H1 (cell line): ENCODE measurements at regions of chr12 and their contacts with region 1.

Region 1: DNA sequence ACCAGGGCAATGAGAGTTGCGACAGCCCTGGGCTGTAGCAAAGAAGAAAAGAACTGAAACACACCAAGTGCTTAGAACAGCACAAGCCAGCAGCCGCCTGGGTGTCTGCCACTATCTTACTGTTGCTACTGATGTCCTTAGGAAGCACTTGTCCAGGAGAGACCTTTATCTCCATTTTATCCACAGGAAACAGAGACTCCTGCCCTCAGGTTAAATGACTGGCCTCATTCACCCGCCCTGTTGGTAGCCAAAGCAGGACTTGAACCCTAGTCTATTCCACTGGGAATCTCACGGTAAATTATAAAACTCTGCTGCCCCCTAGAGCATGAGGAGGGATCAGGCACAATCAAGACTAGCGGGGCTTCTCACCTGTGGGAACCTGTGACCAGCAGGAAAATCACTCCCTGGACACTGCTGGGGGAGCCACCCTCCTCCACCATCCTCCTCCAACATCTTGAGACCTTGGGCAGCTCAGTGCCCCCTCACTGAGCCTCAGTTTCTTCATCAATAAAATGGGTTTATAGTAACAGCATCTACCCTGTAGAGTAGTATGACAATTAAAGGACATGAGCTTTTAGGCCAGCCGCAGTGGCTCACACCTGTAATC is 20.5 kb upstream of the TESC start:
- DNase-seq: peak in 1 of 2 experiments; percentile 79
- H3K4me3 ChIP-seq: no peak overlapping the region
- H3K27ac ChIP-seq: no peak overlapping the region
- H3K4me1 ChIP-seq: peaks cover 0 to 7% (median 3%) of the 10 kb centered on the region in 4 experiments; a peak in 6 of 7 replicates
- H3K27me3 ChIP-seq: no peaks in the 10 kb centered on the region
- CTCF ChIP-seq: peak; percentile 63 to 89 (median 86)
- EP300 ChIP-seq: no peak
- POLR2A ChIP-seq: no peak
- RAD21 ChIP-seq: peak; percentile 88 to 95

Region 2: GRCh38 chr12:116977465-116978380 is 142.0 kb before region 1 on chr12:
- CTCF ChIA-PET with region 1: interaction called, 12 read pairs
- POLR2A ChIA-PET with region 1: no interaction called
- DNase-seq: no peak
- H3K4me3 ChIP-seq: no peak overlapping the region
- H3K27ac ChIP-seq: no peak overlapping the region
- H3K4me1 ChIP-seq: peaks cover 0 to 2% (median under 1%) of the 10 kb centered on the region in 4 experiments; a peak in 2 of 7 replicates
- H3K27me3 ChIP-seq: no peaks in the 10 kb centered on the region
- CTCF ChIP-seq: no peak
- EP300 ChIP-seq: no peak
- POLR2A ChIP-seq: no peak
- RAD21 ChIP-seq: no peak

Region 3: DNA sequence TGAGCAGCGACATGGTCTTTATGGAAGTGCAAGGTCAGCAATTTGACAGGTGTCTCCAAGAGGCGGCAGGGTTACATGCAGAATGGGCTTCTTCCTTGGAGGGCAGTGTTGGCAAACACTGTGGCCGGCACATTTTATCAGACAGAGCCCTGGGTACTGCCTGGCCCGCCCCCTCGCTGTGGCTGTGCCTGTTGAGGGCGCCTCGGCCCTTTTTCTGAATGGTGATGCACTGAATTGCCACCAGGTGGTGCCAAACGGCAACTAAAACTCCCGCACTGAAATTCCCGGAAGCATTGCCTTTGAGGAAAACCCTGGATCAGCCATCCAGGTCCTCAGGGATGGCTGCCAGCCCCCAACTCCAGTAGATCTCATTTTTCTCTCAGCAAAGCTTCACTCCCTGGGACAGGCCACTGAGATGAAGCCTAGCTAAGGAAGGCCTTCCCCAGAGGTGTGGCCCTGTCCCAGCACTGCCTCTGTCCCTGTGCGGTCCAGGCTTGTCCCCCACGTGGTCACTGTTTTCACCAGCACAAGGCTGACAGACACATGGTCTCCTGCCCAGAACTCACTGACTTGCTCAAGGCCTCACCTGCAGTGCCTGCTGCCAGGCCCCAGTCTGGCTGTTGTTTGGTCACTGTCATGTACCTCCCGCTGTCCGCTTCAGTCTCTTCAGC is 94.1 kb before region 1 on chr12:
- CTCF ChIA-PET with region 1: interaction called, 161 read pairs
- POLR2A ChIA-PET with region 1: interaction called, 3 read pairs
- DNase-seq: peak; percentile 38 to 90
- H3K4me3 ChIP-seq: no peak overlapping the region
- H3K27ac ChIP-seq: 0 out of 2 replicates have a peak overlapping the region, but pooled peaks have one; percentile 5
- H3K4me1 ChIP-seq: peaks cover 0 to 2% (median 0%) of the 10 kb centered on the region in 4 experiments; a peak in 1 of 7 replicates
- H3K27me3 ChIP-seq: no peaks in the 10 kb centered on the region
- CTCF ChIP-seq: peak; percentile 80 to 97 (median 82)
- EP300 ChIP-seq: no peak
- POLR2A ChIP-seq: no peak
- RAD21 ChIP-seq: peak; percentile 94 to 98

Region 4: GRCh38 chr12:117047810-117048584 is 71.7 kb before region 1 on chr12:
- CTCF ChIA-PET with region 1: interaction called, 21 read pairs
- POLR2A ChIA-PET with region 1: no interaction called
- DNase-seq: no peak
- H3K4me3 ChIP-seq: no peak overlapping the region
- H3K27ac ChIP-seq: no peak overlapping the region
- H3K4me1 ChIP-seq: peaks cover 2 to 35% (median 26%) of the 10 kb centered on the region in 4 experiments
- H3K27me3 ChIP-seq: no peaks in the 10 kb centered on the region
- CTCF ChIP-seq: no peak
- EP300 ChIP-seq: no peak
- POLR2A ChIP-seq: no peak
- RAD21 ChIP-seq: no peak

Region 5: DNA sequence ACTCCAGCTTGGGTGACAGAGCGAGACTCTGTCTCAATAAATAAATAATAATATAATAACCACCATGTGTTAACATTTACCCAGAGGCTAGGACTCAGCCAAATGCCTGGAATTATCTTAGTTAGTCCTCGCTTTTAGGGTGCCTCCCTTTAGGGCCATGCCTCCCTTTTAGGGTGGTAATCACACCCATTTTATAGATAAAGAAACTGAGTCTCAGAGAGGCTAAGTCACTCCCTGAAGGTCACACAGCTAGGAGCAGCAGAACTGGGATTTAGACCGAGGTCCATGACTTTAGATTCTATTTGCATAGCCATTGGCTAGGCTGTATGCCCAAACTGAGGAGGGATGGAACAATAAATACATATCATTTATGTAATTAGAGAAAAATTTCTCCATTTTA is 31.9 kb before region 1 on chr12:
- CTCF ChIA-PET with region 1: interaction called, 43 read pairs
- POLR2A ChIA-PET with region 1: interaction called, 3 read pairs
- DNase-seq: no peak
- H3K4me3 ChIP-seq: no peak overlapping the region
- H3K27ac ChIP-seq: no peak overlapping the region
- H3K4me1 ChIP-seq: peaks cover 0 to 8% (median 1%) of the 10 kb centered on the region in 4 experiments; a peak in 4 of 7 replicates
- H3K27me3 ChIP-seq: no peaks in the 10 kb centered on the region
- CTCF ChIP-seq: no peak
- EP300 ChIP-seq: no peak
- POLR2A ChIP-seq: no peak
- RAD21 ChIP-seq: no peak

Region 6: DNA sequence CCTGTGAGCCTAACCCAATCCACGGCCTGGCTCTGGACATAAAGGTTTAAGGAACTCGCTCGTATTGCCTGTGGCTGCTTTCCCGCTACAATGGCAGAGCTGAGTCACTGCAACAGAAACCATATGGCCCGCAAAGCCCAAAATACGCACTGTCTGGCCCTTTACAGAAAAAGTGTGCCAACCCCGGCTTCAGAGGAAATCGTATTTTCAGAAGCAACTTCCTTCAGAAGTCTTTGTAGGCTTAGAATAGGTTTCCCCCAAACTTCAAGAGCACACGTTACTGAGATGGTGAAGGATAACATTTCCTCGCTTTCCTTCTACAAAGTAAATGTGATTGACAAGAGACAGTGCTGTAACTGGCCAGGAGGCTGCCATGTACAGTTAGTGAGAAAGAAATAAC is 14.4 kb after region 1 on chr12:
- CTCF ChIA-PET with region 1: interaction called, 53 read pairs
- POLR2A ChIA-PET with region 1: interaction called, 7 read pairs
- DNase-seq: no peak
- H3K4me3 ChIP-seq: no peak overlapping the region
- H3K27ac ChIP-seq: no peak overlapping the region
- H3K4me1 ChIP-seq: no peaks in the 10 kb centered on the region
- H3K27me3 ChIP-seq: no peaks in the 10 kb centered on the region
- CTCF ChIP-seq: no peak
- EP300 ChIP-seq: no peak
- POLR2A ChIP-seq: no peak
- RAD21 ChIP-seq: no peak

Region 7: GRCh38 chr12:117158911-117159310 is 39.2 kb after region 1 on chr12:
- CTCF ChIA-PET with region 1: no interaction called
- POLR2A ChIA-PET with region 1: no interaction called
- DNase-seq: no peak
- H3K4me3 ChIP-seq: no peak overlapping the region
- H3K27ac ChIP-seq: no peak overlapping the region
- H3K4me1 ChIP-seq: peaks cover 0 to 4% (median 4%) of the 10 kb centered on the region in 4 experiments; a peak in 4 of 7 replicates
- H3K27me3 ChIP-seq: no peaks in the 10 kb centered on the region
- CTCF ChIP-seq: no peak
- EP300 ChIP-seq: no peak
- POLR2A ChIP-seq: no peak
- RAD21 ChIP-seq: no peak

Region 8: GRCh38 chr12:117236456-117237001 is 116.8 kb after region 1 on chr12:
- CTCF ChIA-PET with region 1: no interaction called
- POLR2A ChIA-PET with region 1: no interaction called
- DNase-seq: peak; percentile 88 to 100
- H3K4me3 ChIP-seq: peak overlapping the region in 1 of 4 experiments; percentile 27; a peak in 1 of 8 replicates
- H3K27ac ChIP-seq: no peak overlapping the region; the same call in 1 of the 2 replicates
- H3K4me1 ChIP-seq: peaks cover 6 to 11% (median 9%) of the 10 kb centered on the region in 4 experiments; a peak in 4 of 7 replicates
- H3K27me3 ChIP-seq: no peaks in the 10 kb centered on the region
- CTCF ChIP-seq: peak; percentile 67 to 82 (median 72)
- EP300 ChIP-seq: peak in 1 of 2 experiments; percentile 20; a peak in 1 of 3 replicates
- POLR2A ChIP-seq: peak; percentile 22 to 82
- RAD21 ChIP-seq: peak; percentile 75 to 85

Region 9: GRCh38 chr12:117461732-117462131 is 342.0 kb after region 1 on chr12:
- CTCF ChIA-PET with region 1: no interaction called
- POLR2A ChIA-PET with region 1: no interaction called
- DNase-seq: no peak
- H3K4me3 ChIP-seq: no peak overlapping the region
- H3K27ac ChIP-seq: no peak overlapping the region
- H3K4me1 ChIP-seq: no peaks in the 10 kb centered on the region
- H3K27me3 ChIP-seq: no peaks in the 10 kb centered on the region
- CTCF ChIP-seq: no peak
- EP300 ChIP-seq: no peak
- POLR2A ChIP-seq: no peak
- RAD21 ChIP-seq: no peak